ENCODE measurements at regions of chr22 and their contacts with region 1.

Region 1: GRCh38 chr22:38114484-38115398 is 4.3 kb upstream of the BAIAP2L2 start:
- DNase-seq: peak in 1 of 2 experiments; percentile 99
- H3K4me3 ChIP-seq: no peak overlapping the region
- H3K27ac ChIP-seq: no peak overlapping the region
- H3K4me1 ChIP-seq: peaks cover 0 to 9% (median 7%) of the 10 kb centered on the region in 4 experiments; a peak in 3 of 7 replicates
- H3K27me3 ChIP-seq: no peaks in the 10 kb centered on the region; a peak in 2 of 7 replicates
- CTCF ChIP-seq: peak; percentile 93 to 98 (median 98)
- EP300 ChIP-seq: no peak; a peak in 1 of 3 replicates
- POLR2A ChIP-seq: no peak
- RAD21 ChIP-seq: peak; percentile 70 to 81

Region 2: DNA sequence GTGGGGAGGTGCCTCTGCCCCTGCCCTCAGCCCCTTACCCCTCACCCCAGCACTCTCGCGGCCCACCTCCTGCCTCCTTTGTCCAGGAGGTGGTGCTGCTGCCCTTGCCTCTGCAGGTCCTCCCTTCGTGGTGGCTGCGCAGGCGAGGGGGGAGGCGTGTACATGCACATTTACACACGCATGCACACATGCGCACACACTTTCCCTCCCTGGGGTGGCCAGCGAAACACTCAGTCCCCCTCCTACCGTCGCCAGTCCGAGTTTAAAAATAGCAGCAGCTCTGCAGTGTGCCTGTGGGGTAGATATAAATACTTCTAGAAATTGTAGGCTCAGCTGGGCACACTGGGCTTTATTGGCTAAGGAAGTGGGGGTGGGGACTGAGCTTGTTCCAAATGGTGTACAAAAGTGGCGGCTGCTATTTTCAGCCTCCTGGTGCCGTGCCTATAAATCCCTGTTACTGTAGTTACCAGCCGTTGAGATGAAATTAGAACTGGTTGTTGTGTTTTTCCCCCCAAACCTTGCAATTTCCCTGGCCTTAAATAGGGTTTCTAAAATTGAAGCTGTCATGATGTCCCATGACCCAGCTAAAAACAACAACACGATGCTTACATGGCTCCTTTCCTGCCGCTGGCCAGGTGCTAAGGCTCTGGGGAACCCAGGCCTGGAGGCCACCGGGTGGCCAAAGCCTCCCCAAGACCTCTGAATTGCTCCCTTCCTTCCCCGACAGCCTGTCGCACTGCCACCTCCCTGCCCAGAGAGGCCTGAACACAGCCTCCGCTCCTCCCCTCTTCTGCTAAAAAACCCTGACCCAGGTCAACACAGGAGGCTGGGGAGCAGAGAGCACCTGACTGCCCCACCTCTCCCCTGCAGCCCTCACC is 45.1 kb before region 1 on chr22:
- CTCF ChIA-PET with region 1: interaction called, 10 read pairs
- POLR2A ChIA-PET with region 1: interaction called, 3 read pairs
- DNase-seq: no peak
- H3K4me3 ChIP-seq: no peak overlapping the region
- H3K27ac ChIP-seq: no peak overlapping the region; the same call in 1 of the 2 replicates
- H3K4me1 ChIP-seq: no peaks in the 10 kb centered on the region
- H3K27me3 ChIP-seq: no peaks in the 10 kb centered on the region
- CTCF ChIP-seq: peak; percentile 64 to 88 (median 65)
- EP300 ChIP-seq: no peak
- POLR2A ChIP-seq: no peak
- RAD21 ChIP-seq: peak; percentile 57 to 76; a peak in 3 of 4 replicates

Region 3: GRCh38 chr22:38135133-38135751 is 20.5 kb after region 1 on chr22:
- CTCF ChIA-PET with region 1: interaction called, 64 read pairs
- POLR2A ChIA-PET with region 1: no interaction called
- DNase-seq: no peak
- H3K4me3 ChIP-seq: no peak overlapping the region
- H3K27ac ChIP-seq: no peak overlapping the region
- H3K4me1 ChIP-seq: no peaks in the 10 kb centered on the region
- H3K27me3 ChIP-seq: no peaks in the 10 kb centered on the region
- CTCF ChIP-seq: no peak
- EP300 ChIP-seq: no peak
- POLR2A ChIP-seq: no peak
- RAD21 ChIP-seq: no peak

Region 4: GRCh38 chr22:38167988-38168431 is 53.3 kb after region 1 on chr22:
- CTCF ChIA-PET with region 1: interaction called, 25 read pairs
- POLR2A ChIA-PET with region 1: no interaction called
- DNase-seq: no peak
- H3K4me3 ChIP-seq: no peak overlapping the region
- H3K27ac ChIP-seq: no peak overlapping the region
- H3K4me1 ChIP-seq: peaks cover 0 to 4% (median 1%) of the 10 kb centered on the region in 4 experiments; a peak in 3 of 7 replicates
- H3K27me3 ChIP-seq: no peaks in the 10 kb centered on the region
- CTCF ChIP-seq: no peak
- EP300 ChIP-seq: no peak
- POLR2A ChIP-seq: no peak
- RAD21 ChIP-seq: no peak

Region 5: GRCh38 chr22:38214256-38215056 is 99.7 kb after region 1 on chr22:
- CTCF ChIA-PET with region 1: interaction called, 10 read pairs
- POLR2A ChIA-PET with region 1: no interaction called
- DNase-seq: peak; percentile 44 to 95
- H3K4me3 ChIP-seq: peak overlapping the region; percentile 29 to 57 (median 38)
- H3K27ac ChIP-seq: no peak overlapping the region
- H3K4me1 ChIP-seq: peaks cover 10 to 26% (median 17%) of the 10 kb centered on the region in 4 experiments
- H3K27me3 ChIP-seq: peaks cover 0 to 16% (median 13%) of the 10 kb centered on the region in 4 experiments; a peak in 5 of 7 replicates
- CTCF ChIP-seq: peak in 1 of 3 experiments; percentile 0; a peak in 1 of 4 replicates
- EP300 ChIP-seq: no peak
- POLR2A ChIP-seq: peak in 1 of 2 experiments; percentile 54; a peak in 2 of 3 replicates
- RAD21 ChIP-seq: no peak